ENCODE measurements at regions of chr13 and their contacts with region 1.

Region 1: GRCh38 chr13:102707465-102707864 is 12.6 kb upstream of the METTL21C start:
- DNase-seq: peak; percentile 94
- ATAC-seq: peak; percentile 70
- H3K4me3 ChIP-seq: no peak overlapping the region
- H3K27ac ChIP-seq: no peak overlapping the region
- H3K4me1 ChIP-seq: peaks cover 2% of the 10 kb centered on the region; the same call in 1 of the 2 replicates
- H3K27me3 ChIP-seq: peaks cover 11% of the 10 kb centered on the region
- CTCF ChIP-seq: no peak
- POLR2A ChIP-seq: no peak
- RAD21 ChIP-seq: no peak

Region 2: DNA sequence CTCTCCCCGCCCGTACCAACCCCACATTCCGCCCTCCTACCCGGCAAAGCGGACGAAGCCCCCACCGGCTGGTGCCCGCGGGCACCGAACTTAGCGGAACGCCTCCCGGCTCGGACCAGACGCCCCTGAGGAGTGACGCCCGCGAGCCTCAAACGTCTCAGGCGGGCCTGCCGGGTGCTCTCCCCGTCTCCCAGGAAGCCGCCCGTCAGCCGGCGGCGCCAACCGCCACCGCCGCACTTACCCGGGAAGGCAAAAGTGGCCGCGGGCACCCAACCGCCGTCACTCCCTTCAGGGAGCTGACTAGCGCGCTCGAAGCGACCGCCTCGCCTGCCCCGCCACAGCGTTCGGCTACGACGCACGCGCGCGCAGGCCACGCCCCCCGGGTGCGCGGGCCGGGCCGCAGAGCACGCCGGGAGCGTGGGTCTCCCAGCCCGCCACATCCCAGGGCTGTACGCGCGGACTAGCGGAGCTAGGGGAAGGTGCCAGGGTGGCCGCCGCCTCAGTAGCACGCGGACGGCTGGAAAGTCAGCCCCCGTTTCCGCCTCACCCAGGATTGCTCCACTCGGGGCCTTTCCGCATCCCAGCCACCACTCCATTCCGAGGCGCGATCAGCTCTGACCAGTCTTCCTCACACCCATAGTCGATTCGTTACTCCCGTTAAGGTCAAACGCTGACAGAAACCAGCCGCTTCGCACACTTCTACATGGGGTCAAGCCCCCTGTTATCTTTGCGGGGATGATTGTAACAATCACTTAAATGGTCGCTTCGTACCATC is 66.2 kb after region 1 on chr13 and contains the start of gene TEX30:
- CTCF ChIA-PET with region 1: no interaction called
- POLR2A ChIA-PET with region 1: no interaction called
- dilution Hi-C with region 1: no loop called
- in situ Hi-C with region 1: no loop called
- intact Hi-C with region 1: loop called (anchors 5 kb)
- DNase-seq: peak; percentile 76
- ATAC-seq: peak; percentile 97
- H3K4me3 ChIP-seq: peak within 1 kb of the TSS; percentile 76
- H3K27ac ChIP-seq: peak within 1 kb of the TSS; percentile 85
- H3K4me1 ChIP-seq: peaks cover 2% of the 10 kb centered on the region; the same call in 1 of the 2 replicates
- H3K27me3 ChIP-seq: no peaks in the 10 kb centered on the region
- CTCF ChIP-seq: no peak
- POLR2A ChIP-seq: peak; percentile 92
- RAD21 ChIP-seq: 0 out of 2 replicates have a peak, but pooled peaks have one; percentile 2
- total RNA-seq, gene TEX30: 8.1 and 15.3 TPM in 2 replicates

Measured in IMR-90 (cell line).